ENCODE measurements at regions of chr10 and their contacts with region 1.

Region 1: DNA sequence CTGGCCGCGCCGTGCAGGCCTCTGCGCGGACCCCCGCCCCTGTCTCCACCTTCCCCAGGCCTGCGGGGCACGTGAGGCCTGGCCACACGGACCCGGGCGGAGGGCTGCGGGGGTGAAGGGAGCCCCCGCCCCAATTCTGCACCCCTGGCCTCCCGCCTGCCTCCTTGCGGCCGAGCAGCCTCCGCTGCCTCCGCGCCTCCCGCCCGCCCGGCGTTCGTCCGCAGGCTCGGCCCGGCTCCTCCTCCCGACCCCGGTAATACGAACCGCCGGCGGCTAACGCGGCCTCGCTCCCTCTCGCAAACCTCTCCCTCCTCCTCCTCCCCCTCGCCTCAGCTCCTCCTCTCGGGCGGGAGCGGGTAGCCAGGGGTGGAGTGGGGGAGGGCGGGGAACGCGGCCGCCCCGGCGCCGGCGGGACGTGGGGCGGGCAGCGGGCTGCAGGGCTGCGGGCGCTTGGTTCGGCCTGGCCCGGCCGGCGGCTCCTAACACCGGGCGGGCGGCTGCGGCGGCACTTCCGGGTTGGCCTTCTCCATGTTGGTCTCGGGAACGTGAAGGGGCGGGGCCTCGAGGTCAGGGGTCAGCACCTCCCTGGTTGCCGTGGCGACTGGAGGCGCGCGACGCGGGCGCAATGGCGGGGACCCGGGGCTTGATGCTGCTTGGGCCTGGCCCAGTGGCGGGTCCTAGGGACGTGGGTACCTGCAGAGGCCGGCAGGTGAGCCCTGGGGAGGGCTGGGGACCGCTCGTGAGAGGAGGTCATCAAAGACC is at the start of gene RAB11FIP2:
- DNase-seq: peak; percentile 94 to 97 (median 95)
- H3K4me3 ChIP-seq: peak within 1 kb of the TSS; percentile 48 to 74
- H3K4me3 Mint-ChIP-seq: peak within 1 kb of the TSS; percentile 88 to 94 (median 91)
- H3K27ac ChIP-seq: peak within 1 kb of the TSS; percentile 79
- H3K27ac Mint-ChIP-seq: peak within 1 kb of the TSS; percentile 82 to 94 (median 91)
- H3K4me1 ChIP-seq: peaks cover 50% of the 10 kb centered on the region
- H3K4me1 Mint-ChIP-seq: peaks cover 26 to 52% (median 34%) of the 10 kb centered on the region in 4 donors
- H3K27me3 ChIP-seq: no peaks in the 10 kb centered on the region
- H3K27me3 Mint-ChIP-seq: no peaks in the 10 kb centered on the region
- total RNA-seq, gene RAB11FIP2: 20.0 to 23.5 TPM

Region 2: DNA sequence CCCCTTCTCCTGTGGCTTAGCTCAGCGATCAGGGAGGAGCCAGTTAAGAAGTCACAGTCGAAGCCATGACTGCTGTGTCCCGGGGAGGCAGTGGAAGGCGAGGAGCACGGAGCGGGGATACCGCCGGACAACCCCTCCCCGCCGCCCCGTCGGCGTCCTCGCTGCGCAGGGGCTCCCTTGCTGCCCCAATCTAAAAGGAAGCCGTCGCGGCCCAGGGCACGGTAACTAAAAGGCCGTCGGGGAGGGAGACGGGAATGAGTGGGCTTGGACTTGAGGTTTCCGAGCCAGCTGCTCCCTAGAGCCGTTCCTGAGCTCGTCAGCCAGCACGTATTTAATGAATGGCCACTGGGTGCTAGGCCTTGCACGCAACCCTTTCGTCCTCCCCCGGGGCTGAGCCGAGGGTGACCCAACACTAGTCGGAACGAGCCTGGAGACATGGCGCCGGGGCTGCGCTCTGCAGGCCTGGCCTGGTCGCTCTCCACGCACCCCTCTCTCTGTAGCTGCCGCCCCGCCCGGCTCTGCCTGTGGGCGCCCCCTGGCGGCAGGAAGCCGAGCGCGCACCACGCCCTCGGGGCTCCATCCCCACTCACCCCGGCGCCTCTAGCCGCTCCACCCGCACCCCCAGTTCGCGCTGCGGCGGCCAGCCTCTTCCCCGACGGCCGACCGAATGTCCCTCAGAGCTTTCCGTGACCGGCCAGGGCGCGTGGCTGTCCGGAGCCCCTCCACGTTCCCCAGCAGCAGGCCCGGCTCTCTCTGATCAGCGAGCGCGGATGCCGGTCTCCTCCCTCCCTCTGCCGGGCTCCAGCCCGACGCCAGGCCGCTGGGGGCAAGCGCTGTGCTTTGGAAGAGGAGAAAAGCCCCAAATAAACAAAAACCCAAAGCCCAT is 878.5 kb before region 1 on chr10:
- CTCF ChIA-PET with region 1: no interaction called
- POLR2A ChIA-PET with region 1: no interaction called
- intact Hi-C with region 1: loop called (anchors 5 kb)
- DNase-seq: peak; percentile 48 to 69 (median 68)
- H3K4me3 ChIP-seq: no peak overlapping the region
- H3K4me3 Mint-ChIP-seq: peak overlapping the region in 6 of 8 donors; percentile 40 to 80 (median 70)
- H3K27ac ChIP-seq: no peak overlapping the region
- H3K27ac Mint-ChIP-seq: peak overlapping the region in 1 of 7 donors; percentile 43
- H3K4me1 ChIP-seq: peaks cover 25% of the 10 kb centered on the region
- H3K4me1 Mint-ChIP-seq: peaks cover 16 to 44% (median 31%) of the 10 kb centered on the region in 4 donors
- H3K27me3 ChIP-seq: peaks cover 64% of the 10 kb centered on the region
- H3K27me3 Mint-ChIP-seq: peaks cover 66 to 68% of the 10 kb centered on the region in 2 donors

Region 3: DNA sequence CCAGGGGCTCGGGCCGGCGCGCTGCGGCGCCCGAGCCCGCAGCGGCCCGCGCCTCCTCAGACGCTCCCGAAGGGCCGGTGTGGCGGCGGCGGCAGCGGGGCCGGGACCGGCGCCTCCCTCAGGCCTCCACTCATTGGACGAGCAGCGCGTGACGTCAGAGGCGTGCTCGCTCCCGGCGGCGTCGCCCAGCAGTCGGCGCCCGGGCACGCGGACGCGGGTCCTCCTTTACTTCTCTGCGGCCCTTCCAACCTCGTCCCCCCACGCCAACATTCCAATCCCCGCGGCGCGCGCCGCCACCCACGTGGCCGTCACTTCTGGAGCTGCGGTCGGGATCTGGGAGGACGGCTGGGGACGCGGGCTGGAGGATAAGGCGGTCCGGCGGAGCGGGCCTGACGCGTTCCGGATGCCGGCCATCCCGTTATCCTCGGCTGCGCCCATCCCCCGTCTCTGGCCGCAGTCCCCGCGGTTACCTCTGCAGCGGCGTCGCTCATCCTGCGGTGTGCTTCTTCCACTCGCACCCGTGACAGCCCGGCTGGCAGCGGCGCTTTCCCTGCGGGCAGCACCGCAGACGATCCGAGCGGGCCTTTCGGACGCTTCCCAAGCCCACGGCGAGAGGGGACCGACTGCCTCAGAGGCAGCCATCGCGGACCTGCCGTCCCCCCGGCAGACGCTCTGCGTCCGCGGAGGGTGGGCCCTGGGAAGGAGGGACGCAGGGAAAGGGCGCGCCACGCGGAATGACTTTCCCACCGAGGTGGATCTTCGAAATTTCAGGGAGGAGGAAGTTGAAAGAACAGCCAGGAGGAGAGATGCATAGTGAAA is 671.0 kb before region 1 on chr10 and contains the start of gene PDZD8:
- CTCF ChIA-PET with region 1: no interaction called
- POLR2A ChIA-PET with region 1: no interaction called
- intact Hi-C with region 1: loop called (anchors 1 kb)
- DNase-seq: peak; percentile 86 to 90 (median 88)
- H3K4me3 ChIP-seq: peak within 1 kb of the TSS; percentile 64 to 98
- H3K4me3 Mint-ChIP-seq: peak within 1 kb of the TSS; percentile 95 to 97 (median 96)
- H3K27ac ChIP-seq: peak within 1 kb of the TSS; percentile 61
- H3K27ac Mint-ChIP-seq: peak within 1 kb of the TSS; percentile 92 to 98 (median 94)
- H3K4me1 ChIP-seq: peaks cover 29% of the 10 kb centered on the region
- H3K4me1 Mint-ChIP-seq: peaks cover 19 to 44% (median 33%) of the 10 kb centered on the region in 4 donors
- H3K27me3 ChIP-seq: peaks cover 3% of the 10 kb centered on the region
- H3K27me3 Mint-ChIP-seq: peaks cover 6 to 19% of the 10 kb centered on the region in 2 donors
- total RNA-seq, gene PDZD8: 13.9 to 15.0 TPM

Region 4: DNA sequence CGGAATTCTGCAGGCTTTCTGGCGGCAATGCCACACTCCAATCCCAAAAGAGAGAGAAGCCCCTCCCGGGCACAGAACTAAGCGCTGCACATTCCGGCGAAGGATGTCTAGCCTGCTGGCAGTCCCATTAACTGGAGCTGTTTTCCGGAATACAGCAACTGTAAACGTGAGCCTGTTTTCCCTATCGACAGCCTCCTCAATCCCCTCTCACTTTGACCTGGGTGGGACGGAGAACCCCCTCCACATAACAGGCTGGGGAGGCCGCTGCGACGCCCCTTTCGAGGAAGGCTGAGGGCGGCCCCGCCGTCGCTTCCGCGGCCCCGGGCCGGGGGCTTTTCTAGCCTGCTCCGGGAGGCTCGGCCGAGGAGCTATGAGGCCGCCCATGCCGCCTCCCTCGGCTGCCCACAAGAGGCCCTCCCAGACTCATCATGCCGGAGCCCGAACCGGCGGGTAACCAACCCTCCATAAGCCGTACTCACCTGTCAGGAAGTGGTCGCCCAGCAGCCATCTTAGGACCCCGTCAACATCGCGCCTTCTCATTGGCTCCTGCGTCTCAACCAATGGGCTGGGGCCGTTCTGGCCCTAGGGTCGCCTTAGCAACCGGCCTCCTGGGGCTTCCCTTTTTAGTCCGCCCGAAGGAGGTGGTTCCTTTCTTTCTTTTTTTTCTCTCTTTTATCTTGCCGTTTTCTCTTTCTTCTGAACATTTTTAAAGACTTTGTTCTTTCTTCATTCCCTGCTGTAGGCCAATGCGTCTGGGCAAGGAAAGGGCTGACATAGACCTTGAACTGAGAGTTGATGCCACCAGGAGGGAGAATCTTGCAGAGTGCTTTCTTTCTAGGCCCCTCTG is 295.4 kb after region 1 on chr10 and contains the start of gene FAM204A:
- CTCF ChIA-PET with region 1: no interaction called
- POLR2A ChIA-PET with region 1: no interaction called
- intact Hi-C with region 1: loop called (anchors 1 kb)
- DNase-seq: peak; percentile 96 to 99 (median 97)
- H3K4me3 ChIP-seq: peak within 1 kb of the TSS; percentile 88 to 96
- H3K4me3 Mint-ChIP-seq: peak within 1 kb of the TSS; percentile 93 to 100 (median 95)
- H3K27ac ChIP-seq: peak within 1 kb of the TSS; percentile 78
- H3K27ac Mint-ChIP-seq: peak within 1 kb of the TSS; percentile 93 to 99 (median 97)
- H3K4me1 ChIP-seq: peaks cover 46% of the 10 kb centered on the region
- H3K4me1 Mint-ChIP-seq: peaks cover 35 to 64% (median 49%) of the 10 kb centered on the region in 4 donors
- H3K27me3 ChIP-seq: no peaks in the 10 kb centered on the region
- H3K27me3 Mint-ChIP-seq: peaks cover 0 to 2% of the 10 kb centered on the region in 2 donors
- total RNA-seq, gene FAM204A: 64.3 to 65.9 TPM